WTC11 (cell line): ENCODE measurements at regions of chrX and their contacts with region 1.

Region 1: DNA sequence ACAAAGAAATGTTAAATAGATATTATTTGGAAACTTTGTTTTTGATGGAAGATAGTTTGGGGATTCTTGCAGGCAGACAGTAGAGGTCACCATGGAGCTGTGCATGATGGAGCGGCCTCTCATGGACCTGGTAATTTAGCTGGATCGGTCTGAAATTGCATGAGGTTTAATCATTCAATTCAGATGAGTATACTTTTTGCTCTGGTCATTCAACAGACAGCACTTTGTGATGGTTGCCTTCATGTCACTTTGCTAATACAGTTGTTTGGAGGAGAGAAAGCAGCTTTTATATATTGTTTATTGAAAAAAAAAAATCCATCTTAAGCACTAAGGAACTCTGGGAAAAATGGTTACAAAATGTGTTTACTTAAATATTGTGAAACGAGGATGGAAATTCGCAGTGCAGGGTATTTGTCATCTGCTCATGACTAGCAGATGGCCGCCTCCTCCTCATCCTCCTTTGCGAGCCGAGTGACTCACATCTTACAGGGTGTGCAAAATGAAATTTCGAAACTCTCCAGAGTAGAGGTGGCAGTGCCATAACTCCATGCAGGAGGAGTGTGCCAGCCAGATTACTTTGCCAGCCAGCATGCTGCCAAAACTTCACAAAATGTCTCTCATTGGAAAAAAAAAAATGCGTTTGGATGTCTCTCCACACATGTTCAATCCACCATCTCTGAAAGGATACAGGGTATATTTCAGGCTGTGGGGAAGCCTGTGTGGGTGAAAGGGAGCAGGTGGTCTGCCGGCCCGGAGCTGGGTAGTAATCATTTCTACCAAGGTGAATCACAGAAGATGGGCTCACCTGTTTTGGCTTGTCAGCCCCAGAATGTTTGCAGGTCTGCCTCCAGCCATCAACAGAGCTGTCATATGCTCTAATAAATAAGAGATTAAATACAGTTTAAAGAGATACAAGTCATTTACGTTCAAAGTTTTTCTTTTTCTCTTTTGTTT is 314.9 kb upstream of the DIPK2B start:
- DNase-seq: peak; percentile 14
- ATAC-seq: peak; percentile 30; the same call in 1 of the 2 replicates
- H3K4me3 Mint-ChIP-seq: no peak overlapping the region
- H3K27ac Mint-ChIP-seq: no peak overlapping the region
- H3K4me1 Mint-ChIP-seq: peaks cover 12% of the 10 kb centered on the region
- H3K27me3 Mint-ChIP-seq: no peaks in the 10 kb centered on the region
- CTCF ChIP-seq: no peak

Region 2: DNA sequence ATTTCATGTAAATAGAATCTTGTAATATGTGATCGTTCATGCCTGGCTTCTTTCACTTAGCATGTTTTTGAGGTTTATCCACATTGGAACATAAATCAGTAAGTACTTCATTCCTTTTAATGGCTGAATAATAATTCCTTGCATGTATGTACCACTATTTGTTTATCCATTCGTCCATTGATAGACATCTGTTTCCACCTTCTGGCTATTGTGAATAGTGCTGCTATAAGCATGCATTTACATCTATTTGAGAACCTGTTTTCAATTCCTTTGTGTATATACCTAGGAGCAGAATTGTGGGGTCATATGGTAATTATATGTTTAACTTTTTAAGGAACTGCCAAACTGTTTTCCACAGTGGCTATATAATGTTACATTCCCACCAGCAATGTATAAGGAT is 41.9 kb after region 1 on chrX:
- CTCF ChIA-PET with region 1: no interaction called
- POLR2A ChIA-PET with region 1: no interaction called
- DNase-seq: no peak
- ATAC-seq: no peak
- H3K4me3 Mint-ChIP-seq: no peak overlapping the region
- H3K27ac Mint-ChIP-seq: no peak overlapping the region
- H3K4me1 Mint-ChIP-seq: no peaks in the 10 kb centered on the region
- H3K27me3 Mint-ChIP-seq: no peaks in the 10 kb centered on the region
- CTCF ChIP-seq: no peak

Region 3: GRCh38 chrX:46376246-46376885 is 860.8 kb after region 1 on chrX:
- CTCF ChIA-PET with region 1: interaction called, 11 read pairs
- POLR2A ChIA-PET with region 1: no interaction called
- DNase-seq: peak; percentile 11
- ATAC-seq: peak; percentile 88
- H3K4me3 Mint-ChIP-seq: no peak overlapping the region
- H3K27ac Mint-ChIP-seq: peak overlapping the region; percentile 95
- H3K4me1 Mint-ChIP-seq: peaks cover 19% of the 10 kb centered on the region
- H3K27me3 Mint-ChIP-seq: no peaks in the 10 kb centered on the region
- CTCF ChIP-seq: no peak